Psoas muscle (tissue), 8 donors: ENCODE measurements at regions of chr9 and their contacts with region 1.

Region 1: DNA sequence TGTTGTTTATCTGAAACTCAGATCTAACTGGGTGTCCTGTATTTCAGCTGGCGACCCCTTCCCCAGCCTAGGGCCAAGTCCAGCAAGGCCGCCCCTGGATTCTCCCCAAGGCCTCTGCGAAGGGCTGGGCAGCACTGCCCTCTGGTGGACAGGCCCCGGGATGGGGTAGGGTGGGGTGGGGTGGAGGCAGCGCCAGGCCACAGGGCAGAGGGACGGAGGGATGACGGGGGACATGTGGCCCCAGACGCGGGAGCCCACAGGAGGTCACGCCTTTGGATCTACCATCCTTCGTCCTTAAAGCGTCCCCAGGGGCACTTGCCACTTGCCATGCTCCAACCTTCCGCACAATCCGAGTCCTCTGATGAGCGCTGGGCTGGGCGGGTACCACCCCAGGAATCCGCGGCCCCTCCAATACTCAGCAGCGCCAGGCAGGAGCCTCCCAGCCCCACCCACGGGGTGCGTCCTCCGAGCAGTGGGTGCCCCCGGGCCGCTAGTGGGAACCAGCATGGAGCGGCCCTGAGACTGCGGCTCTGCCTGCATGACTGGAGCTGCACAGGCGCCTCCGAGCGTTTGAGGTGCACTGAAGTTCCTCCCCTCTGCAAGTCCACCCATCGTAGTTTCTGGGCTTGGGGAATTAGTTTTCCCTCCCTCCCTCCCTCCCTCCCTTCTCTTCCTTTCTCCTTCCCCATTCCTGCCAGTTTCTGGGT is 7.1 kb upstream of the AGPAT2 start:
- DNase-seq: peak; percentile 72 to 85
- ATAC-seq: peak; percentile 61 to 72 (median 64)
- H3K4me3 ChIP-seq: no peak overlapping the region
- H3K27ac ChIP-seq: peak overlapping the region; percentile 30
- H3K4me1 ChIP-seq: peaks cover 27% of the 10 kb centered on the region
- H3K27me3 ChIP-seq: peaks cover 0 to 14% (median 3%) of the 10 kb centered on the region in 3 donors
- CTCF ChIP-seq: peak; percentile 71

Region 2: GRCh38 chr9:136631038-136632000 is 63.1 kb before region 1 on chr9:
- intact Hi-C with region 1: loop called in 1 of 2 experiments (anchors 5 kb)
- DNase-seq: peak; percentile 83 to 88
- ATAC-seq: peak; percentile 83 to 95 (median 90)
- H3K4me3 ChIP-seq: no peak overlapping the region
- H3K27ac ChIP-seq: no peak overlapping the region
- H3K4me1 ChIP-seq: no peaks in the 10 kb centered on the region
- H3K27me3 ChIP-seq: peaks cover 0 to 2% (median 0%) of the 10 kb centered on the region in 3 donors
- CTCF ChIP-seq: peak; percentile 81

Region 3: DNA sequence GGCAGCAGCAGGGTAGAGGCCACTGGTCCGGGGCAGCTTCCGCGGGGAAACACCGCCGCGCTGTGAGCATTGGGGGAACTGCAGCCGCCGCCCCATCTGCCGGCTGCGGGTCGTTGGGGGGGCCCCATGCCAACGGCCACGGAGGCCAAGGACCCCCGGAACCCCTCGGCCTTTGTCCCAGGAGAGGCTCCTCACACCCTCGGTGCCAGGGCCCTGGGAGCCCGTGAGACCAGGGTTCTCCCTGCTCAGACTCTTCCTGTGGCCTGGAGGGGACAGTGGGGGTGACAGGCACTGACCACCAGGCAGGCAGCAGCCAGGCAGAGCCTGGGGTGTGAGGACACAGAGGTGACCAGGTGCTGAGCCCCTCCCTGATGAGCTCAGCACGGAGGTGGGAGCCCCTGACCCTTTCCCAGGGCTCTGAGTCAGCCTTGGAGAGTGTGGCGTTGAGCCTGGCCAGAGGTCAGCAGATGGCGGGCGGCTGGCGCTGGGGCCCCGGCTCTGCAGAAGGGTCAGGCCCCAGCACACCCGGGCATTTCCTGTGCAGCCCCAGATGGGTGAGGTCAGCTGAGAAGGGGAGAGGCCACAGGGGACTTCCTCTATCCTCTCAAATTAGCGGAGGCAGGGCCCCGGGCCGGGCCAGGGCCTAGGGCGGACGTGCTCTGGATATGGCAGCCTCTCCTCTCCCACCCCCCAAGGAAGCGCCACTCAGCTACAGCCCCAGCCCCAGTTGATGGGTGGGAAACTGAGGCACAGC is 49.6 kb before region 1 on chr9:
- intact Hi-C with region 1: loop called in 1 of 2 experiments (anchors 5 kb)
- DNase-seq: peak; percentile 75 to 92
- ATAC-seq: peak; percentile 81 to 88 (median 84)
- H3K4me3 ChIP-seq: peak overlapping the region; percentile 63
- H3K27ac ChIP-seq: peak overlapping the region; percentile 77
- H3K4me1 ChIP-seq: peaks cover 10% of the 10 kb centered on the region
- H3K27me3 ChIP-seq: peaks cover 0 to 14% (median 0%) of the 10 kb centered on the region in 3 donors
- CTCF ChIP-seq: peak; percentile 84

Region 4: GRCh38 chr9:137021979-137022619 is 327.7 kb after region 1 on chr9:
- intact Hi-C with region 1: no loop called
- DNase-seq: peak; percentile 54 to 81
- ATAC-seq: peak; percentile 38 to 80 (median 60)
- H3K4me3 ChIP-seq: no peak overlapping the region
- H3K27ac ChIP-seq: no peak overlapping the region
- H3K4me1 ChIP-seq: peaks cover 9% of the 10 kb centered on the region
- H3K27me3 ChIP-seq: no peaks in the 10 kb centered on the region
- CTCF ChIP-seq: no peak